ENCODE measurements at regions of chrX and their contacts with region 1.

Region 1: GRCh38 chrX:150486011-150486410 is 82.4 kb upstream of the MTM1 start:
- DNase-seq: peak in 8 of 9 donors; percentile 7 to 46 (median 34)
- ATAC-seq: peak; percentile 74
- H3K4me3 ChIP-seq: no peak overlapping the region
- H3K4me3 Mint-ChIP-seq: no peak overlapping the region
- H3K27ac ChIP-seq: no peak overlapping the region
- H3K27ac Mint-ChIP-seq: no peak overlapping the region
- H3K4me1 ChIP-seq: no peaks in the 10 kb centered on the region
- H3K4me1 Mint-ChIP-seq: peaks cover 0 to 48% (median 0%) of the 10 kb centered on the region in 7 donors
- H3K27me3 ChIP-seq: no peaks in the 10 kb centered on the region
- H3K27me3 Mint-ChIP-seq: no peaks in the 10 kb centered on the region

Region 2: GRCh38 chrX:150200820-150201287 is 285.2 kb before region 1 on chrX:
- CTCF ChIA-PET with region 1: no interaction called
- POLR2A ChIA-PET with region 1: no interaction called
- intact Hi-C with region 1: loop called in 1 of 2 experiments (anchors 10 kb)
- DNase-seq: peak in 1 of 9 donors; percentile 54
- ATAC-seq: peak; percentile 77
- H3K4me3 ChIP-seq: no peak overlapping the region
- H3K4me3 Mint-ChIP-seq: no peak overlapping the region
- H3K27ac ChIP-seq: no peak overlapping the region
- H3K27ac Mint-ChIP-seq: peak overlapping the region in 1 of 9 donors; percentile 29
- H3K4me1 ChIP-seq: no peaks in the 10 kb centered on the region
- H3K4me1 Mint-ChIP-seq: peaks cover 0 to 4% (median 0%) of the 10 kb centered on the region in 7 donors
- H3K27me3 ChIP-seq: no peaks in the 10 kb centered on the region
- H3K27me3 Mint-ChIP-seq: peaks cover 0 to 4% (median 0%) of the 10 kb centered on the region in 5 donors

Region 3: GRCh38 chrX:150449313-150449712 is 36.7 kb before region 1 on chrX:
- CTCF ChIA-PET with region 1: interaction called, 3 read pairs
- POLR2A ChIA-PET with region 1: no interaction called
- intact Hi-C with region 1: loop called in 1 of 2 experiments (anchors 1 kb)
- DNase-seq: no peak
- ATAC-seq: no peak
- H3K4me3 ChIP-seq: no peak overlapping the region
- H3K4me3 Mint-ChIP-seq: no peak overlapping the region
- H3K27ac ChIP-seq: no peak overlapping the region
- H3K27ac Mint-ChIP-seq: no peak overlapping the region
- H3K4me1 ChIP-seq: no peaks in the 10 kb centered on the region
- H3K4me1 Mint-ChIP-seq: peaks cover 4 to 45% (median 8%) of the 10 kb centered on the region in 7 donors
- H3K27me3 ChIP-seq: no peaks in the 10 kb centered on the region
- H3K27me3 Mint-ChIP-seq: no peaks in the 10 kb centered on the region

Region 4: GRCh38 chrX:150870487-150871340 is 384.7 kb after region 1 on chrX:
- CTCF ChIA-PET with region 1: no interaction called
- POLR2A ChIA-PET with region 1: no interaction called
- intact Hi-C with region 1: no loop called
- DNase-seq: no peak
- ATAC-seq: no peak
- H3K4me3 ChIP-seq: no peak overlapping the region
- H3K4me3 Mint-ChIP-seq: no peak overlapping the region
- H3K27ac ChIP-seq: no peak overlapping the region
- H3K27ac Mint-ChIP-seq: no peak overlapping the region
- H3K4me1 ChIP-seq: no peaks in the 10 kb centered on the region
- H3K4me1 Mint-ChIP-seq: peaks cover 7 to 37% (median 22%) of the 10 kb centered on the region in 7 donors
- H3K27me3 ChIP-seq: no peaks in the 10 kb centered on the region
- H3K27me3 Mint-ChIP-seq: no peaks in the 10 kb centered on the region